CD8-positive, alpha-beta T cell (primary cell): ENCODE measurements at regions of chr14 and their contacts with region 1.

Region 1: GRCh38 chr14:68248481-68249255 is 429.1 kb downstream of the RAD51B start:
- DNase-seq: peak in 3 of 9 experiments; percentile 52 to 79 (median 64)
- ATAC-seq: peak; percentile 79
- H3K4me3 ChIP-seq: no peak overlapping the region
- H3K4me3 Mint-ChIP-seq: no peak overlapping the region
- H3K27ac ChIP-seq: no peak overlapping the region
- H3K27ac Mint-ChIP-seq: peak overlapping the region; percentile 47
- H3K4me1 ChIP-seq: peaks cover 15% of the 10 kb centered on the region
- H3K4me1 Mint-ChIP-seq: peaks cover 30% of the 10 kb centered on the region
- H3K27me3 ChIP-seq: no peaks in the 10 kb centered on the region
- H3K27me3 Mint-ChIP-seq: no peaks in the 10 kb centered on the region
- CTCF ChIP-seq: peak; percentile 67

Region 2: GRCh38 chr14:67837011-67837624 is 411.6 kb before region 1 on chr14:
- CTCF ChIA-PET with region 1: no interaction called
- POLR2A ChIA-PET with region 1: no interaction called
- intact Hi-C with region 1: loop called (anchors 5 kb)
- DNase-seq: peak in 7 of 9 experiments; percentile 41 to 85 (median 60)
- ATAC-seq: peak; percentile 62
- H3K4me3 ChIP-seq: no peak overlapping the region
- H3K4me3 Mint-ChIP-seq: no peak overlapping the region
- H3K27ac ChIP-seq: no peak overlapping the region
- H3K27ac Mint-ChIP-seq: no peak overlapping the region
- H3K4me1 ChIP-seq: no peaks in the 10 kb centered on the region
- H3K4me1 Mint-ChIP-seq: peaks cover 5% of the 10 kb centered on the region
- H3K27me3 ChIP-seq: no peaks in the 10 kb centered on the region
- H3K27me3 Mint-ChIP-seq: no peaks in the 10 kb centered on the region
- CTCF ChIP-seq: peak; percentile 69

Region 3: DNA sequence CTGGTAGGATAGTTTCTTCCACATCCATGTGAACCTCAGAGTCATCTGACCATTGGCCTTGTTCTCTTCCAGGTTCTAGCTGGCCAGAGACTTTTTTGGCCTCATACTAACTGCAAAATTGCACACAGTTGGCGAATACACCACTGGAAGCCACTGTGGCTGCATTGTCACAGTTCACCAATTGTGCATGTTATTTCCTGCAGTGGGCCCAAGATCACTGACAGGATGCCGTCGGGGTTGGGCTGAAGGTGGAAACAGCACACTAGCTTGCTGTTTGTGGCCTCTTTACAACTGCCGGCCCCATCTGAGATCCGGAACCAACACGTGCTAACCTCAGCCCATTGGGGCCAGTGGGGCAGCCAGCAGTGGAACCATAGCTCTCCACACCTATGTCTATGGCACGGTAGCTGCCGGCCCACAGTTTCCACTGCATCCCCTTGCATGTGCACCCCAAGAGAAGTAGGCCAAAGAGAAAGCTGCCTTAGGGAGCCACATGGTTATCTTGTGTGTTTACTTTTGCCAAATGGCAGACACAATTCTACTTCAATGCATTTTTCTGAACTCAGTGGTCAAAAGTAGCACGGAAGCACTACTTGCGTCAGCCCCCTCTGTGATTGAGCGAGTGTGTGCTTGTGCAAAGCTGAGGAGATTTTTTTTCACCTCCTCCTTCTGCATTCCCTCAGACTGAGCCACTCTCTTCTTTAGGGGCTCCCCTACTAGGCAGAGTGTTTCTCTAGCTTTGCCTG is 34.9 kb after region 1 on chr14:
- CTCF ChIA-PET with region 1: interaction called, 8 read pairs
- POLR2A ChIA-PET with region 1: interaction called, 5 read pairs
- intact Hi-C with region 1: loop called in 1 of 2 experiments (anchors 5 kb)
- DNase-seq: peak; percentile 32 to 87 (median 72)
- ATAC-seq: peak; percentile 69
- H3K4me3 ChIP-seq: peak overlapping the region in 1 of 2 experiments; percentile 6
- H3K4me3 Mint-ChIP-seq: peak overlapping the region; percentile 62
- H3K27ac ChIP-seq: peak overlapping the region; percentile 57 to 89
- H3K27ac Mint-ChIP-seq: peak overlapping the region; percentile 98
- H3K4me1 ChIP-seq: peaks cover 71% of the 10 kb centered on the region
- H3K4me1 Mint-ChIP-seq: peaks cover 85% of the 10 kb centered on the region
- H3K27me3 ChIP-seq: no peaks in the 10 kb centered on the region
- H3K27me3 Mint-ChIP-seq: no peaks in the 10 kb centered on the region
- CTCF ChIP-seq: no peak

Region 4: GRCh38 chr14:68439676-68440075 is 191.0 kb after region 1 on chr14:
- CTCF ChIA-PET with region 1: interaction called, 4 read pairs
- POLR2A ChIA-PET with region 1: no interaction called
- intact Hi-C with region 1: loop called in 1 of 2 experiments (anchors 10 kb)
- DNase-seq: no peak
- ATAC-seq: no peak
- H3K4me3 ChIP-seq: no peak overlapping the region
- H3K4me3 Mint-ChIP-seq: no peak overlapping the region
- H3K27ac ChIP-seq: no peak overlapping the region
- H3K27ac Mint-ChIP-seq: no peak overlapping the region
- H3K4me1 ChIP-seq: no peaks in the 10 kb centered on the region
- H3K4me1 Mint-ChIP-seq: peaks cover 5% of the 10 kb centered on the region
- H3K27me3 ChIP-seq: no peaks in the 10 kb centered on the region
- H3K27me3 Mint-ChIP-seq: no peaks in the 10 kb centered on the region
- CTCF ChIP-seq: no peak

Region 5: DNA sequence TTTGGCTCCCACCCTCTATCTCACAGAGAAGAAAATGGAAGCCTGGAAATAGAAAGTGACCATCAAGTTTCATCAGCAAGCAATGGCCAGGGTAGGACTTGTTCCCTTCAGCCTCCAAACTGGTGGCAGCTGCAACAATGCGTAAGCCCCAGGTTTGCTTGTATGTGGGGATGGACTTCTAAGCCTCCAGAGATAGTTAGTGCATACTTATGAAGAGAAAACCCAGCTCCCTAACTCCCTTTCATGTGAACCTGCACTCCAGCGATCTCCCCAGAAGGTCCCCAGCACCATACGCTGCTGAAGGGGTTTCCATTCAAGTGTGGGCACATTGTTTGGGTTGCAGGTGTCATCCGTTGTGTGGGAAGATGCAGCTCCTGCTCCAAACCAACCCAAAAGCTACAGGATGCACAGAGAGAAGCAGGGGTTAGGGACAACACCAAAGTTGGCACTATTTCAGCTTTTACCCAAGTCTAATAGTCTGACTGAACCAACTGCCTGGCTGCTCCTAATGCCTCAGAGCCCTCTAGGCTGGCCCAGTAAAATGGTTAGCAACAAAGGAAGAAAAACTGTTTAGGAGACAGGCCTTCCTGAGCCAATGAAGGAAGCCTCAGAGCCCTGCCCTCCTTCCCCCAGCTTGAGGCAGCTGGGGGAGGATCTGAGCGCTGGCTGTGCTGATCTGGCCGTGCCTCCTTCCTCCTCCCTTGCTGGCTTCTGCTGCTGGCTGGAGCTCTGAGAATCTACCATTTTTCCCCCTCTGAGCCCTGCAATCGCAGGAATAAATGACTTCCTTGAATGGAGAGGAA is 531.9 kb after region 1 on chr14:
- CTCF ChIA-PET with region 1: interaction called, 52 read pairs
- POLR2A ChIA-PET with region 1: interaction called, 54 read pairs
- intact Hi-C with region 1: no loop called
- DNase-seq: peak in 5 of 9 experiments; percentile 36 to 72 (median 58)
- ATAC-seq: peak; percentile 11
- H3K4me3 ChIP-seq: peak overlapping the region; percentile 29 to 41
- H3K4me3 Mint-ChIP-seq: peak overlapping the region; percentile 83
- H3K27ac ChIP-seq: peak overlapping the region; percentile 47 to 86
- H3K27ac Mint-ChIP-seq: peak overlapping the region; percentile 96
- H3K4me1 ChIP-seq: peaks cover 82% of the 10 kb centered on the region
- H3K4me1 Mint-ChIP-seq: peaks cover 84% of the 10 kb centered on the region
- H3K27me3 ChIP-seq: no peaks in the 10 kb centered on the region
- H3K27me3 Mint-ChIP-seq: no peaks in the 10 kb centered on the region
- CTCF ChIP-seq: no peak

Region 6: GRCh38 chr14:68816262-68816942 is 567.7 kb after region 1 on chr14:
- CTCF ChIA-PET with region 1: interaction called, 262 read pairs
- POLR2A ChIA-PET with region 1: interaction called, 47 read pairs
- intact Hi-C with region 1: loop called (anchors 1 kb)
- DNase-seq: peak; percentile 82 to 97 (median 91)
- ATAC-seq: peak; percentile 76
- H3K4me3 ChIP-seq: peak overlapping the region; percentile 59 to 69
- H3K4me3 Mint-ChIP-seq: peak overlapping the region; percentile 79
- H3K27ac ChIP-seq: peak overlapping the region; percentile 77 to 91
- H3K27ac Mint-ChIP-seq: peak overlapping the region; percentile 98
- H3K4me1 ChIP-seq: peaks cover 66% of the 10 kb centered on the region
- H3K4me1 Mint-ChIP-seq: peaks cover 68% of the 10 kb centered on the region
- H3K27me3 ChIP-seq: no peaks in the 10 kb centered on the region
- H3K27me3 Mint-ChIP-seq: no peaks in the 10 kb centered on the region
- CTCF ChIP-seq: peak; percentile 95